Prostate gland (tissue), 2 donors: ENCODE measurements at regions of chr3 and their contacts with region 1.

Region 1: DNA sequence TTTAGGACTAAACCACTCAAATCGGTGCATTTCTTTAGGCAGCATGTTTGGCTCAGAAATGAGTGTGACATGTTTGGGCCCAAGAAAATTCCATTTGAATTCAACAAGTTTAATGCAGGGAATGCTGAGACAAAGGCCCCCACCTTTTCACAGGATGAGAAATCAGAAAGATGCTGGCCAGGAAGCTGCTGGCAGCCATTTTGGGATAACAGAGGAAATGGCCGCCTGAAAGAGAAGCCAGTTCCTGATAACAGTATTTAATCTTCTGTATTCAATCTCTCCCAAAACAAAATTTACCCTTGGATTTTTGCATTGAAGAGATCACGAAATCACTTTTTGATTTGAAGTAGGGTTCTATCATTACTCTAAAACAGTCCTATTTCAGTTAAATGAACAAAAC is 350.9 kb downstream of the SLC9A9 start:
- DNase-seq: no peak
- H3K4me3 ChIP-seq: no peak overlapping the region
- H3K27ac ChIP-seq: no peak overlapping the region
- H3K4me1 ChIP-seq: no peaks in the 10 kb centered on the region
- H3K27me3 ChIP-seq: no peaks in the 10 kb centered on the region
- CTCF ChIP-seq: no peak
- POLR2A ChIP-seq: no peak

Region 2: DNA sequence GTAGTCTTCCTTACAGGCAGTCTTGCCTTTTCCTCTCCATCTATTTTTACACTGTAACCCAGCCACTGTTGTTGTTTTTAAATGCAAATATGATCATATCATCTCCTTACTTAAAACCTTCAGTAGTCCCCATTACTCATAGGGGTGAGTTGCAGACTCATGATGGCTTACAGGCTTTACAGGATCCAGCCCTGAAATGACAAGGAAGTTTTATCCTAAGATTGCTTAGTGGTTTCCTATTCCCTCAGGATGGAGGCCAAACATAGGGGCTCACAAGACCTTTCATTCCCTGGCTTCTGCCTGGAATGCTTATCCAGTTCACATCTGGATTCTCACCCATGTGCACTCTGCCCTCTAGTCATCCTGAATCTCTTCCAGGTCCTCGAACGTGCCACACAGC is 580.8 kb before region 1 on chr3:
- intact Hi-C with region 1: no loop called
- DNase-seq: no peak
- H3K4me3 ChIP-seq: no peak overlapping the region
- H3K27ac ChIP-seq: no peak overlapping the region
- H3K4me1 ChIP-seq: no peaks in the 10 kb centered on the region
- H3K27me3 ChIP-seq: no peaks in the 10 kb centered on the region
- CTCF ChIP-seq: no peak
- POLR2A ChIP-seq: no peak

Region 3: GRCh38 chr3:143070977-143071551 is 426.3 kb before region 1 on chr3:
- intact Hi-C with region 1: no loop called
- DNase-seq: no peak
- H3K4me3 ChIP-seq: no peak overlapping the region
- H3K27ac ChIP-seq: no peak overlapping the region
- H3K4me1 ChIP-seq: no peaks in the 10 kb centered on the region
- H3K27me3 ChIP-seq: no peaks in the 10 kb centered on the region
- CTCF ChIP-seq: no peak
- POLR2A ChIP-seq: no peak

Region 4: DNA sequence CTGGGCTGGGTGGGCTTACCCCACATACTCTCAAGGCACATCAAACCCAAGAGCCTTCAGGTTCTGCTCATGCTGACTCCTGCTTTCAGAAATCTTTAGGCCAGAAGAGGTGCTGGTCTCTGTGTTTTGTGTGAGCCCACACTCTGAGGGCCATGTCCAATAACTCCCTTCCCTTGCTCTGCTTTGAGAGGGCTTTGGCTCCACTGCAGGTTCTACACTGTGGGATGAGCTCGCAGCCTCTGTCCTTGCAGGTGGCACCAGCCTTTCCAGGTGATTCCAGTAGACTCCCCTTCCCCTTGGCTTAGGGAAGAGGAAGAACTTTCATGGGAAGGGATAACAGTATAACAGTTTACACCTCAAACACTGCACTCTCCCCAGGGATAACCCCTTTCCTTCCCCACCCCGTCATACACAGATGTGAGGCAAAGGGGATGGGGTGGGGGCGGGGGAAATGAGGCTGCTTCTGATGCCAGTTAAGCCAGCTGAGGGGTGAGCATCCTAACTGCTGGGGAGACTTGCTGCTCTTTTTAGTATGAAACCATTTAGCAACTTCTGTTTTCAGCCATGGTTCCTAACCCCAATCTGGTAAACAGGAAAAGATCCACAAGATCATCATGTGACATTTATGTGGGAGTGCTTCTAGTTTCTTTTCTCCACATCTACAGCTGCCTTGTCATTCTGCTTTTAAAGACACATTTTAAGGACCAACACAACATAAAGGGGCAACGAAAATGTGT is 88.5 kb after region 1 on chr3:
- intact Hi-C with region 1: loop called (anchors 10 kb)
- DNase-seq: no peak
- H3K4me3 ChIP-seq: no peak overlapping the region
- H3K27ac ChIP-seq: peak overlapping the region in 1 of 2 donors; percentile 30
- H3K4me1 ChIP-seq: no peaks in the 10 kb centered on the region
- H3K27me3 ChIP-seq: no peaks in the 10 kb centered on the region
- CTCF ChIP-seq: no peak
- POLR2A ChIP-seq: no peak

Region 5: DNA sequence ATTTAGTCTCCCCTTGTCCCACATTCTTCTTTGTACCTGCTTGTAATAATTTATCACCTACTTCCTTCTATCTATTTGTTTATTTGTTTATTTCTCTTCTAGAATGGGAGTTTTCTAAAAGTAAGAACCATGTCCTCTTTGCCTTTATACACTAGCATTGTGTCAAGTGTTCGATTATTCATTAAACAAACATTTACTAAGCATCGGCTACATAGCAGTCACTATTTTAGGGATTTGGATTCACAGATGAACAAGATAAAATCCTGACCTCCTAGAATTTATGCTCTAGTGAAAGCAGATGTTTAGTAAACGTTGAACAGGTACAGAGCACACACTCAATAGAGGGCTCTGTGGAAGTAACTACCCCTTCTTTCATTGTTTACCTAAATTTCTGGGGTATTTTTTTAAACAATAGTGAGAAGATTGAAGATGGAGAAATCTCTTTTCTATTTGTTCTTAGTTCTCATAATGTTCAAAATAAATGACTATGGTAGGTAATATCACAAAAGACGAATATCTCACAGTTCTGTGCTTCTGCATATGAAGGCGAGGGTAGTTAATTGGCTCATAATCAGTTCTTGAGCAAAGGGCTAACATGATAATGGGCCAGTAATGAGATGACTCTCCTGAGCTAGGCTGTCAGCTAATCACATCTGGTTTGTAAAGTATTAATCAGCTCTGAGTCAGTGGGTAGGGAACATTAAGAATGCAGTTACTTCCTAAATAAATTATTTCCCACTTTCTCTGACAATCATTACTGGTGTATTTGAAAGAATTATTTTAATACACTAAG is 239.0 kb after region 1 on chr3:
- intact Hi-C with region 1: no loop called
- DNase-seq: no peak
- H3K4me3 ChIP-seq: no peak overlapping the region
- H3K27ac ChIP-seq: no peak overlapping the region
- H3K4me1 ChIP-seq: no peaks in the 10 kb centered on the region
- H3K27me3 ChIP-seq: no peaks in the 10 kb centered on the region
- CTCF ChIP-seq: no peak
- POLR2A ChIP-seq: no peak

Region 6: GRCh38 chr3:143749926-143750325 is 252.5 kb after region 1 on chr3:
- intact Hi-C with region 1: no loop called
- DNase-seq: no peak
- H3K4me3 ChIP-seq: no peak overlapping the region
- H3K27ac ChIP-seq: no peak overlapping the region
- H3K4me1 ChIP-seq: no peaks in the 10 kb centered on the region
- H3K27me3 ChIP-seq: no peaks in the 10 kb centered on the region
- CTCF ChIP-seq: no peak
- POLR2A ChIP-seq: no peak